IMR-90 (cell line): ENCODE measurements at regions of chr3 and their contacts with region 1.

Region 1: DNA sequence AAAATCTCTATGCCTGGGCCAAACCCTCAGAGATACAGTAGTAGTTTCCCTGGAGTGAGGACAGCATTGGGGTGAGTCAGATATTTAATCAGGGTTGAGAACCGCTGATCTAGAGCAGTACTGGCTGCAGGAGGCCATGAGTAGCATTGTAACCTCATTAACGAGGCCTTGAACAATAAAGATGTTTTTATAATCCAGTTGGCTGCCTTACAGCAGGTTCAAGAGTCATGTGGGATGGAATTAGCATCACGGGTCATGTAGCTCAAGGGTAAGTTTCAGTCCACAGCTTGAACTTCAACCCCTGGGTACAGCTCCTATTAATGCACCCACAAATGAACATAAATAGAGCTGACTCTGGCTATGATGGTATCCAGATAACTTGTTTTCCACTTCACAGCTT is 5.1 kb downstream of the HPS3 start:
- DNase-seq: peak; percentile 41
- ATAC-seq: peak; percentile 30; the same call in 1 of the 2 replicates
- H3K4me3 ChIP-seq: no peak overlapping the region
- H3K27ac ChIP-seq: no peak overlapping the region
- H3K4me1 ChIP-seq: peaks cover 10% of the 10 kb centered on the region
- H3K27me3 ChIP-seq: no peaks in the 10 kb centered on the region
- CTCF ChIP-seq: no peak
- POLR2A ChIP-seq: no peak
- RAD21 ChIP-seq: no peak

Region 2: GRCh38 chr3:149174901-149175300 is 40.3 kb after region 1 on chr3:
- CTCF ChIA-PET with region 1: interaction called, 3 read pairs
- POLR2A ChIA-PET with region 1: no interaction called
- dilution Hi-C with region 1: no loop called
- in situ Hi-C with region 1: no loop called
- intact Hi-C with region 1: loop called (anchors 5 kb)
- DNase-seq: no peak
- ATAC-seq: no peak
- H3K4me3 ChIP-seq: no peak overlapping the region
- H3K27ac ChIP-seq: no peak overlapping the region
- H3K4me1 ChIP-seq: peaks cover 11% of the 10 kb centered on the region; the same call in 1 of the 2 replicates
- H3K27me3 ChIP-seq: no peaks in the 10 kb centered on the region
- CTCF ChIP-seq: no peak
- POLR2A ChIP-seq: no peak
- RAD21 ChIP-seq: no peak